ENCODE measurements at regions of chr15 and their contacts with region 1.

Region 1: GRCh38 chr15:98779463-98780071 is 131.2 kb downstream of the IGF1R start:
- DNase-seq: peak; percentile 96 to 99 (median 99)
- H3K4me3 ChIP-seq: peak overlapping the region in 2 of 7 experiments; percentile 7 to 47
- H3K27ac ChIP-seq: peak overlapping the region in 1 of 2 experiments; percentile 16
- H3K4me1 ChIP-seq: peaks cover 0 to 42% (median 22%) of the 10 kb centered on the region in 4 experiments
- H3K27me3 ChIP-seq: no peaks in the 10 kb centered on the region

Region 2: GRCh38 chr15:98599909-98600691 is 179.5 kb before region 1 on chr15:
- CTCF ChIA-PET with region 1: no interaction called
- POLR2A ChIA-PET with region 1: no interaction called
- DNase-seq: peak; percentile 46 to 81 (median 78)
- H3K4me3 ChIP-seq: peak overlapping the region; percentile 30 to 77 (median 71)
- H3K27ac ChIP-seq: peak overlapping the region in 1 of 2 experiments; percentile 54
- H3K4me1 ChIP-seq: peaks cover 5 to 13% (median 9%) of the 10 kb centered on the region in 4 experiments
- H3K27me3 ChIP-seq: peaks cover 0 to 3% (median 0%) of the 10 kb centered on the region in 5 experiments

Region 3: GRCh38 chr15:98760112-98760826 is 19.3 kb before region 1 on chr15:
- CTCF ChIA-PET with region 1: interaction called, 12 read pairs
- POLR2A ChIA-PET with region 1: interaction called, 8 read pairs
- DNase-seq: no peak
- H3K4me3 ChIP-seq: no peak overlapping the region
- H3K27ac ChIP-seq: no peak overlapping the region
- H3K4me1 ChIP-seq: peaks cover 0 to 15% (median 3%) of the 10 kb centered on the region in 4 experiments
- H3K27me3 ChIP-seq: no peaks in the 10 kb centered on the region

Measured in common myeloid progenitor, CD34-positive (primary cell).